Pancreas (tissue), 10 donors: ENCODE measurements at regions of chrX and their contacts with region 1.

Region 1: GRCh38 chrX:130393451-130394074 is 8.1 kb upstream of the GPR119 start:
- DNase-seq: peak; percentile 25 to 71 (median 54)
- ATAC-seq: peak; percentile 69 to 94 (median 91)
- H3K4me3 ChIP-seq: no peak overlapping the region
- H3K27ac ChIP-seq: no peak overlapping the region
- H3K4me1 ChIP-seq: no peaks in the 10 kb centered on the region
- H3K27me3 ChIP-seq: peaks cover 0 to 28% (median 1%) of the 10 kb centered on the region in 4 donors
- CTCF ChIP-seq: peak; percentile 45 to 73 (median 57)

Region 2: DNA sequence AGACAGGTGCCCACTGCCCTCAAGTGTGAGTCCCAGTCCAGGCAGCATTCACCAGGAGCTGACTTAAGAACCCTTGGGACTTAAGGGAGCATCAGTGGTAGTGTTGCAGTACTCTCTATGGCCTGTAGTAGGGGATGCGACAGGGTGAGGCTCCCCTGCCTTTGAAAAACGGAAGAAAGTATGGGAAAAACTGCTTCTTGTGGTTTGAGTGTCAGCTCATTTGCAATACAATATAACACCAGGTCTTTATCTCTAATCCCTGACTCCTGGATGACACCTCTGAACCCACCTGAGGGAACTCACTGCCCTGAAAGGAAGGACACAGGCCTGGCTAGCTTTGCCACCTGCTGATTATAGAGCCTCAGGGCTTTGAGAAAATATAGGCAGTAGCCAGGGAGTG is 1046.3 kb before region 1 on chrX:
- intact Hi-C with region 1: no loop called
- DNase-seq: no peak
- ATAC-seq: no peak
- H3K4me3 ChIP-seq: no peak overlapping the region
- H3K27ac ChIP-seq: no peak overlapping the region
- H3K4me1 ChIP-seq: no peaks in the 10 kb centered on the region
- H3K27me3 ChIP-seq: no peaks in the 10 kb centered on the region
- CTCF ChIP-seq: no peak

Region 3: GRCh38 chrX:130909469-130910136 is 516.0 kb after region 1 on chrX:
- intact Hi-C with region 1: loop called in 2 of 3 experiments (anchors 5 to 10 kb)
- DNase-seq: no peak
- ATAC-seq: peak in 1 of 4 donors; percentile 26
- H3K4me3 ChIP-seq: no peak overlapping the region
- H3K27ac ChIP-seq: no peak overlapping the region
- H3K4me1 ChIP-seq: no peaks in the 10 kb centered on the region
- H3K27me3 ChIP-seq: no peaks in the 10 kb centered on the region
- CTCF ChIP-seq: no peak

Region 4: DNA sequence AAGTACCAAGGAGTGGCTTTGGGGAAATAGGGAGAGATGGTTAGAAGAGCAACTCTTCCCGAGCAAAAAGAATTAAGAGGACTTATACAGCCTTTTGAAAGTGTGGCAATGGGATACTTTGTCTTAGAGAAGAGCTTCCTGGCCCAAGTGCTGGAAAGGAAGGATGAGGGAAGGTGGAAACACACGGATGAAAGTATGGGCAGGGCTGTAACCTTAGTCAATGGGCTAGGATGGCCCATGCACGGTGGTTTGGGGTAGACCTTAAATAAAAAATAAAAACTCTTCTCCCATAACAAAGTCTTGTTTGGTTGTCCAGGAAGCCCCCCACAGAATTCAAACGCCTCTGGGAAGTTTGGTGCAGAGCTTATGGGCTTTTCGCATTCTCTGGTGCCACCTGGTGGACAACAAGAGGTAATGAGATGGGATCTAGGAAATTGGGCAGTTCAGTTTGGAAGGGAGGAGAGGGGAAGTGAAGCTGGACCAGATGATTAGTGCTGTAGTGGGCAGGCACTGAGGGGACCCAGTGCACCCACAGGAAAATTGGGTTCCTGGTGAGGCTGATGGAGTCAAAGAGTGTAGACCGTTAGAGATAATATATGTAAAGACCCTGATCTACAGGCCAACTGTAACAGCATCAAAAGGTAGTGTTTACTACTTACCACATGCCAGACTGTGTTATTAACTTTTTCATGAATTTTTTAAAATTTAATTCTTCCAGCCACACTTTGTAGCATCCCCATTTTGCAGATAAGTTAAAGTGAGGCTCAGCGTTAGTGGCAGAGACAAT is 523.3 kb after region 1 on chrX:
- intact Hi-C with region 1: loop called in 2 of 3 experiments (anchors 5 to 10 kb)
- DNase-seq: peak in 3 of 6 donors; percentile 11 to 45 (median 18)
- ATAC-seq: peak in 3 of 4 donors; percentile 80 to 87 (median 84)
- H3K4me3 ChIP-seq: no peak overlapping the region
- H3K27ac ChIP-seq: no peak overlapping the region
- H3K4me1 ChIP-seq: no peaks in the 10 kb centered on the region
- H3K27me3 ChIP-seq: peaks cover 0 to 10% (median 0%) of the 10 kb centered on the region in 4 donors
- CTCF ChIP-seq: peak; percentile 70 to 83 (median 74)

Region 5: DNA sequence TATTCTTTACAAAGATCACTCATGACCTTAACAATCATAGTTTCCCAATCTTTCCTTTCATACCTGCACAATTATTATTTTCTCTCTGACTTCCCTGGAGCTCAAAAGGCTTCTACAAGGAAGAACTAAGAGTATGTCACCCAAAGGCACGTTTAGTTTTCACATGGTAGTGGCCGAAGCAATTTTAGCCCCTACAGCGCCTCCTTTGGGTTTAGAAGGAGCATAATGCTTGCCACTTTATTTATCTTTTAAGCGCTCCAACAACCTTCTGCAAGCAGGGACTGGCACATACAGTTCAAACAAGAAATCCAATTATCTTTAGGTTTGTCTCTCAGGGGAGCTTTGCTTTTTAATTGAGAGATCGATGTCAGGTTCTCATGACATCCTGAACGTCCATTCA is 937.6 kb after region 1 on chrX:
- intact Hi-C with region 1: no loop called
- DNase-seq: no peak
- ATAC-seq: no peak
- H3K4me3 ChIP-seq: no peak overlapping the region
- H3K27ac ChIP-seq: no peak overlapping the region
- H3K4me1 ChIP-seq: no peaks in the 10 kb centered on the region
- H3K27me3 ChIP-seq: no peaks in the 10 kb centered on the region
- CTCF ChIP-seq: no peak